ENCODE measurements at regions of chr1 and their contacts with region 1.

Region 1: DNA sequence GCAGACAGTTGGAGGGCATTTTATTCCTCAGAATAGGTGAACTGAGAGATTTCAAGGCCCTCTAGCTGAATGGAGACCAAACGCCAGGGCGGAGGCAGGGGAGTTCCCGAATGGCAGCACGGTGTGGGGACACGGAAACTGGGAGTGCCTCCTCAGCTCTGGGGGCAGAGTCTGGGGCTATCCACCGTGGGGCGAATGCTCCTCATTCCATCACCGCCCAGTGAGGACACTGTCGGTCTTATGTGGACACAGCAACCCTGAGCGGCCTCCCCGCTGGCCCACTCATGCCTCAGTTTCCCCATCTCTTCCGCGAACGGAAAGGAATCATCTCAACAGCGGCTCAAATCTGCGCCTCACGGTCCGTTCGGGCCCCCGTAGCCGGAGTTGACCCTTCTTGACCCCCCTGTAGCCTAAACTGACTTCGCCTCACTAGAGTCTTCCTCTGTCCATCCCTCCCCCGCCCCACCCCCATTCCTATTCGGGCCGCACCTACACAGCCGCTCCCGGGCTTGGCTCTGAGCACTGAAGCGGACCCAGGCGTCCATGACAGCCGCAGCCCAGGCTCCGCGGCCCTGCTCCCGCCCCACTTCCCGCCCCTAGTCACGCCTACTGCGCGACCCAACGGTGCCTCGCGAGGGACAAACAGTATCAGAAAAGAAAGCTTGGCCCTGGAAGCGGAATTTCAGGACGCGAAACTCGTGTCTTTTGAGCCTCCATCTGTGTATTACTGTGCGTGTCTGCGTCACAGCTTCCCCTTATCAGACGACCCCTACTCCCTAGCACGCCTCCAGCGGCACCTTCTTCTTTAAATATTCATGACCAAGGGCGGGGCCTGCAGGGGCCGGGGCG is at the start of gene PEX11B:
- DNase-seq: peak; percentile 92
- H3K4me3 Mint-ChIP-seq: peak within 1 kb of the TSS; percentile 90
- H3K27ac Mint-ChIP-seq: peak within 1 kb of the TSS; percentile 94
- H3K4me1 Mint-ChIP-seq: peaks cover 47% of the 10 kb centered on the region
- H3K27me3 Mint-ChIP-seq: no peaks in the 10 kb centered on the region
- total RNA-seq, gene PEX11B: 29.0 to 33.2 TPM

Region 2: GRCh38 chr1:145688328-145688727 is 230.0 kb before region 1 on chr1:
- CTCF ChIA-PET with region 1: no interaction called
- POLR2A ChIA-PET with region 1: no interaction called
- DNase-seq: no peak
- H3K4me3 Mint-ChIP-seq: no peak overlapping the region
- H3K27ac Mint-ChIP-seq: no peak overlapping the region
- H3K4me1 Mint-ChIP-seq: peaks cover 34% of the 10 kb centered on the region
- H3K27me3 Mint-ChIP-seq: no peaks in the 10 kb centered on the region

Region 3: GRCh38 chr1:145782166-145783099 is 135.9 kb before region 1 on chr1:
- CTCF ChIA-PET with region 1: no interaction called
- POLR2A ChIA-PET with region 1: no interaction called
- DNase-seq: no peak
- H3K4me3 Mint-ChIP-seq: no peak overlapping the region
- H3K27ac Mint-ChIP-seq: no peak overlapping the region
- H3K4me1 Mint-ChIP-seq: peaks cover 30% of the 10 kb centered on the region
- H3K27me3 Mint-ChIP-seq: no peaks in the 10 kb centered on the region

Region 4: GRCh38 chr1:145906954-145907753 is 11.2 kb before region 1 on chr1:
- CTCF ChIA-PET with region 1: interaction called, 3 read pairs
- POLR2A ChIA-PET with region 1: interaction called, 12 read pairs
- DNase-seq: no peak
- H3K4me3 Mint-ChIP-seq: no peak overlapping the region
- H3K27ac Mint-ChIP-seq: no peak overlapping the region
- H3K4me1 Mint-ChIP-seq: peaks cover 9% of the 10 kb centered on the region
- H3K27me3 Mint-ChIP-seq: no peaks in the 10 kb centered on the region

Region 5: DNA sequence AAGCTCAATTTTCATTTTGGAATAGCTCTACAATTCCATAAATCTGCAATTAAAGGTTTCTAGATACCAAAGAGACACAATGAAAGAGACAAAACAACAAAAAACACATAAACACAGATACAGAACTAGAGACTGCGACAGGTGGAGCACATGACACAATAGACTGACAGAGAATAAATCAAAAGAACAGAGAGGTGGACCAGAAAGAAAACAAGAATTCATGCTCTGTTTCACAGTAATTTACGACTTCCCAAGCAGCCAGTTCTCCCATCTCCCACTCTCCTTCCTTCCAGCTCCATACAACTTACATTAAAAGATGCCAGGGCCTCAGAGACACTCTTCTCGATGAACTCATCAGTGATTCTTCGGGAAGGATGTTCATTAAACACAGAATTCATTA is 24.0 kb after region 1 on chr1:
- CTCF ChIA-PET with region 1: no interaction called
- POLR2A ChIA-PET with region 1: no interaction called
- DNase-seq: no peak
- H3K4me3 Mint-ChIP-seq: no peak overlapping the region
- H3K27ac Mint-ChIP-seq: no peak overlapping the region
- H3K4me1 Mint-ChIP-seq: peaks cover 2% of the 10 kb centered on the region
- H3K27me3 Mint-ChIP-seq: no peaks in the 10 kb centered on the region